H1 (cell line): ENCODE measurements at regions of chr2 and their contacts with region 1.

Region 1: DNA sequence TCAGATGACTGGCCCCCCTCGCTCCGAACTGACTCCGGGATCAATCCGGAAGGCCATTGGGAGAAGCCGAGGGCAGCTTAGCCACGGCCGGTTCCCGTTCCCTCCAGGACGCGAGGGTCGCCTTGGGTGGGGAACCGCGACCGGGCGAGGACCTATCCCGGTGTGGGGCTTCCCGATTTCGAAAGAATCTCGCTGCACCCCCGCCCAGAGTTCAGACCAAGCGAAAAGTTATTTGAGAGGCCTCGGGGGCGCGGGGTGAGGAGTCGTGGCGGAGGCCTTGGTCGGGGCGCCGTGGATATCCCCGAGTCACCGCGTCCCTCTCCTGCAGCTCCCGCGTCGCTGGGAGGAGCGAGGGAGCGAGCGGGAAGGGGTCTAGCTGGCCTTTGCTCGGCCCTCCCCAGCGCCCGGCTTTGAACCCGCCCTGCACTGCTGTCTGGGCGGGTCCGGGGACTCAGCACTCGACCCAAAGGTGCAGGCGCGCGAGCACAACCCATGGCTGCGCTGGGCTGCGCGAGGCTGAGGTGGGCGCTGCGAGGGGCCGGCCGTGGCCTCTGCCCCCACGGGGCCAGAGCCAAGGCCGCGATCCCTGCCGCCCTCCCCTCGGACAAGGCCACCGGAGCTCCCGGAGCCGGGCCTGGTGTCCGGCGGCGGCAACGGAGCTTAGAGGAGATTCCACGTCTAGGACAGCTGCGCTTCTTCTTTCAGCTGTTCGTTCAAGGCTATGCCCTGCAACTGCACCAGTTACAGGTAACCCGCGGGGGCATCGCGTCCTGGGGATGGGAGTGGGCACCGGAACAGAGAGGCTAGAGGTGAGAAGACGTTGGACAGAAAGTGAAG is at the start of gene CYP27A1:
- DNase-seq: peak in 1 of 2 experiments; percentile 70
- H3K4me3 ChIP-seq: peak within 1 kb of the TSS; percentile 58 to 79 (median 68)
- H3K27ac ChIP-seq: no peak within 1 kb of the TSS
- H3K4me1 ChIP-seq: peaks cover 0 to 2% (median under 1%) of the 10 kb centered on the region in 4 experiments; a peak in 1 of 7 replicates
- H3K27me3 ChIP-seq: peaks cover 4 to 33% (median 25%) of the 10 kb centered on the region in 4 experiments
- CTCF ChIP-seq: no peak
- EP300 ChIP-seq: no peak
- POLR2A ChIP-seq: no peak
- RAD21 ChIP-seq: no peak
- total RNA-seq, gene CYP27A1: 3.9 and 5.4 TPM in 2 replicates

Region 2: GRCh38 chr2:218375212-218375611 is 406.7 kb before region 1 on chr2:
- CTCF ChIA-PET with region 1: no interaction called
- POLR2A ChIA-PET with region 1: no interaction called
- DNase-seq: no peak
- H3K4me3 ChIP-seq: no peak overlapping the region
- H3K27ac ChIP-seq: no peak overlapping the region
- H3K4me1 ChIP-seq: no peaks in the 10 kb centered on the region
- H3K27me3 ChIP-seq: no peaks in the 10 kb centered on the region
- CTCF ChIP-seq: no peak
- EP300 ChIP-seq: no peak
- POLR2A ChIP-seq: no peak
- RAD21 ChIP-seq: no peak

Region 3: GRCh38 chr2:218796691-218797090 is 14.8 kb after region 1 on chr2:
- CTCF ChIA-PET with region 1: interaction called, 4 read pairs
- POLR2A ChIA-PET with region 1: interaction called, 10 read pairs
- DNase-seq: no peak
- H3K4me3 ChIP-seq: no peak overlapping the region
- H3K27ac ChIP-seq: no peak overlapping the region
- H3K4me1 ChIP-seq: peaks cover 0 to 10% (median 1%) of the 10 kb centered on the region in 4 experiments; a peak in 3 of 7 replicates
- H3K27me3 ChIP-seq: no peaks in the 10 kb centered on the region
- CTCF ChIP-seq: no peak
- EP300 ChIP-seq: no peak
- POLR2A ChIP-seq: no peak
- RAD21 ChIP-seq: no peak

Region 4: DNA sequence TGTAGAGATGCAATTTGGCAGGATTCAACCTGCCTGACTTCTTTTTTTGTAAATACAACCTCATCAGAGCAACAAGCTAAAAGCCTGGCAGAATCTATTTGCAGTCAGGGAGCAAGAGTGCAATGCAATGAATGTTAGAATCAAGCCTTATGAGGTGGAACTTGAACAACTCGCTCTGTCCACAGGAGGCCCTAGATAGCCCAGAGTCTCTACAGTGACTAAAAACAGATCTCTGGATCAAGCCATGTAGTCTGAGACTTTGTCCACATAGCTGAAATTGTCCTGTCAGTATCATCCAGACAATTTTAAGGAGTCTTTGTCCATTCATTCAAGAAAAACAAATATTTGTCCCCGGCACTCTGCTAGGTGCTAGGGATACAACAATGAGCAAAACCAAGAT is 145.5 kb after region 1 on chr2:
- CTCF ChIA-PET with region 1: no interaction called
- POLR2A ChIA-PET with region 1: no interaction called
- DNase-seq: no peak
- H3K4me3 ChIP-seq: no peak overlapping the region
- H3K27ac ChIP-seq: no peak overlapping the region
- H3K4me1 ChIP-seq: no peaks in the 10 kb centered on the region
- H3K27me3 ChIP-seq: no peaks in the 10 kb centered on the region
- CTCF ChIP-seq: no peak
- EP300 ChIP-seq: no peak
- POLR2A ChIP-seq: no peak
- RAD21 ChIP-seq: no peak